PC-3 (cell line): ENCODE measurements at regions of chr6 and their contacts with region 1.

Region 1: DNA sequence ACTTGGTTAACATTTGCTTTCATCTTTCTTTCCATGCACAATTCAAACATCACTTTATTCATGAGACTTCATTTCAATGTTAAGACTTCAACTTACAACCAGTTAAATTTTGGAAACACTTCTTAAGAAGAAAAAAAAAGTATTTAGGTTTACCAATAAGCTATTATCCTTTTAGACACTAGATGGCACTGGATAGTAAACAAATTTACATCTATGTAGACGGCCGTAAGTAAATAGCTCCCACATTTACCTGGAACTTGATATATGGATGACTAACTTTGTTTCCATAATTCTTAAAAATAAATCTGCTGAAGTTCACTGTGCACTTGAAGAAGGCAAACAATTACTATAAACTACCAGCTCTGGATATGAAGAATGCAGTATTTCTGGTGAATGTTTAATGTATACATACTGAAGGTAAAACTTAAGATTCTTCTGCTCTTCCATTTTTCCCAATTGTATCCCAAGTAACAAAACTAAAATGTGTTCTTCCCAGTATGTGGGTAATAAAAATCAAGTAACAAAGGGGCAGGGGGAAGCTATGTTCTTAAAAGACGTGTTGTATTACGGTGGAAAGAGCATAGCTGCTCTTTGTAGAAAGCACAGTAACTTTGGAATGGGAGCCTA is 130.6 kb upstream of the C6orf118 start:
- DNase-seq: peak; percentile 76
- ATAC-seq: peak; percentile 73
- H3K4me3 ChIP-seq: no peak overlapping the region
- H3K27ac ChIP-seq: peak overlapping the region; percentile 49
- H3K4me1 ChIP-seq: peaks cover 5% of the 10 kb centered on the region
- H3K27me3 ChIP-seq: no peaks in the 10 kb centered on the region
- CTCF ChIP-seq: peak; percentile 70

Region 2: GRCh38 chr6:165484178-165484889 is 44.3 kb after region 1 on chr6:
- CTCF ChIA-PET with region 1: no interaction called
- POLR2A ChIA-PET with region 1: no interaction called
- intact Hi-C with region 1: loop called (anchors 1 kb)
- DNase-seq: no peak
- ATAC-seq: no peak
- H3K4me3 ChIP-seq: no peak overlapping the region
- H3K27ac ChIP-seq: no peak overlapping the region
- H3K4me1 ChIP-seq: peaks cover 13% of the 10 kb centered on the region
- H3K27me3 ChIP-seq: no peaks in the 10 kb centered on the region
- CTCF ChIP-seq: no peak

Region 3: GRCh38 chr6:165508321-165508869 is 68.4 kb after region 1 on chr6:
- CTCF ChIA-PET with region 1: no interaction called
- POLR2A ChIA-PET with region 1: no interaction called
- intact Hi-C with region 1: no loop called
- DNase-seq: no peak
- ATAC-seq: no peak
- H3K4me3 ChIP-seq: no peak overlapping the region
- H3K27ac ChIP-seq: no peak overlapping the region
- H3K4me1 ChIP-seq: no peaks in the 10 kb centered on the region
- H3K27me3 ChIP-seq: no peaks in the 10 kb centered on the region
- CTCF ChIP-seq: no peak

Region 4: GRCh38 chr6:165545806-165546205 is 105.8 kb after region 1 on chr6:
- CTCF ChIA-PET with region 1: no interaction called
- POLR2A ChIA-PET with region 1: no interaction called
- intact Hi-C with region 1: no loop called
- DNase-seq: no peak
- ATAC-seq: no peak
- H3K4me3 ChIP-seq: no peak overlapping the region
- H3K27ac ChIP-seq: no peak overlapping the region
- H3K4me1 ChIP-seq: no peaks in the 10 kb centered on the region
- H3K27me3 ChIP-seq: no peaks in the 10 kb centered on the region
- CTCF ChIP-seq: no peak

Region 5: DNA sequence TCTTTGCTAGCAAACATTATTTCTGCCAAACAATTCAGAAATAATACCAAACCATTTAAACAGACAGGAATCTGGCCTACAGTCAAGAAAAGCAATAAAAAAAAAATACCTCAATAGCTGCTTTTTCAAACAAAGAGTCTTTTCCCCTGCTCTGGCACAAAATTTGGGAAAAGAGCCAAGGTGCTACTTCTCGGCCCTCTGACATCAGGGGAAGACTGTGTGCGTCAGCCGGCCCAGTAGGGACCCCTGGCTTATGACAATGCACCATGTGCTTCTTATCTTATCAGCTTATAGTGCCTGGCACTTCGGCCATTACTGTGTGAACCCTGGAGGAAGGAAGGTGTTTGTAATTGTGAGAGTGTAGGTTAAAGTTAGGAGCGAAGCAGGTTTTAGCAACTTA is 133.6 kb after region 1 on chr6:
- CTCF ChIA-PET with region 1: no interaction called
- POLR2A ChIA-PET with region 1: no interaction called
- intact Hi-C with region 1: loop called (anchors 2 kb)
- DNase-seq: peak; percentile 67
- ATAC-seq: no peak
- H3K4me3 ChIP-seq: 0 out of 2 replicates have a peak overlapping the region, but pooled peaks have one; percentile 34
- H3K27ac ChIP-seq: peak overlapping the region; percentile 98
- H3K4me1 ChIP-seq: peaks cover 25% of the 10 kb centered on the region
- H3K27me3 ChIP-seq: no peaks in the 10 kb centered on the region
- CTCF ChIP-seq: no peak

Region 6: DNA sequence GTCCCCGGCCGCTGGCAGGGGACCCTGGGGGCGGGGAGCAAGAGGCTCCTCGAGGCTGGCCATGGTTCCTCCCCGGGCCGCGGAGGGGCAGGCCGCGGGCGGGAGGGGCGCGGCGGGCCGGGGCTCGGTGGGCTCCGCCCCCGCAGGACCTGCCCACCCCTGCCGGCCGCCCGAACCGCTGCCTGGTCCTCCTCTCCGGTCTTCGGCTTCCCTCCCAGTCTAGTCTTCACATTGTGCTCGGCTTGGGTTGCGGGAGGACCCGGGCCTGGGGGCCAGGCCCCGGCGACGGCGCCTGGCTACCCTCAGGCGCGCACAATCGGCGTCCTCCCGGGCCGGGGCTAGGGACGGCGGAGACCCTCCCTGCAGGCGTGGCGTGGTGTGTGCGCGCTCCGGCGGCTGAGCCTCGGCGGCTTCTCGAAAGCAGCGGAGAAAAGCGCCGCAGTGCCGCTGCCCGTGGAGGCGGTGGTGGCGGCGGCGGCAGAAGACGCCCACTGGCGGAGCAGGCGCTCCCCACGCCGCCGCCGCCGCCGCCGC is 222.8 kb after region 1 on chr6 and contains the start of gene PDE10A:
- CTCF ChIA-PET with region 1: no interaction called
- POLR2A ChIA-PET with region 1: no interaction called
- intact Hi-C with region 1: loop called (anchors 10 kb)
- DNase-seq: no peak
- ATAC-seq: peak; percentile 49
- H3K4me3 ChIP-seq: peak within 1 kb of the TSS; percentile 58
- H3K27ac ChIP-seq: no peak within 1 kb of the TSS
- H3K4me1 ChIP-seq: peaks cover 4% of the 10 kb centered on the region; the same call in 1 of the 2 replicates
- H3K27me3 ChIP-seq: peaks cover 63% of the 10 kb centered on the region
- CTCF ChIP-seq: no peak
- total RNA-seq, gene PDE10A: 0.92 and 2.1 TPM in 2 replicates

Region 7: GRCh38 chr6:165850434-165851019 is 410.5 kb after region 1 on chr6:
- CTCF ChIA-PET with region 1: interaction called, 6 read pairs
- POLR2A ChIA-PET with region 1: no interaction called
- intact Hi-C with region 1: loop called (anchors 1 kb)
- DNase-seq: peak; percentile 62
- ATAC-seq: peak; percentile 54; the same call in 1 of the 2 replicates
- H3K4me3 ChIP-seq: no peak overlapping the region
- H3K27ac ChIP-seq: no peak overlapping the region
- H3K4me1 ChIP-seq: 0 out of 2 replicates have a peak, but pooled peaks cover 4% of the 10 kb centered on the region
- H3K27me3 ChIP-seq: peaks cover 6% of the 10 kb centered on the region
- CTCF ChIP-seq: peak; percentile 79